Activated CD8-positive, alpha-beta memory T cell treated with anti-CD3 and anti-CD28 coated beads, Interleukin-2, amount 10 ng/mL, durations not matched to agents 7 days and 5 days (primary cell): ENCODE measurements at regions of chr15 and their contacts with region 1.

Region 1: GRCh38 chr15:67303490-67304363 is 49.1 kb downstream of the IQCH start:
- DNase-seq: no peak
- ATAC-seq: peak; percentile 53
- H3K4me3 Mint-ChIP-seq: no peak overlapping the region
- H3K27ac Mint-ChIP-seq: no peak overlapping the region
- H3K4me1 Mint-ChIP-seq: peaks cover 15% of the 10 kb centered on the region
- H3K27me3 Mint-ChIP-seq: peaks cover 20% of the 10 kb centered on the region

Region 2: DNA sequence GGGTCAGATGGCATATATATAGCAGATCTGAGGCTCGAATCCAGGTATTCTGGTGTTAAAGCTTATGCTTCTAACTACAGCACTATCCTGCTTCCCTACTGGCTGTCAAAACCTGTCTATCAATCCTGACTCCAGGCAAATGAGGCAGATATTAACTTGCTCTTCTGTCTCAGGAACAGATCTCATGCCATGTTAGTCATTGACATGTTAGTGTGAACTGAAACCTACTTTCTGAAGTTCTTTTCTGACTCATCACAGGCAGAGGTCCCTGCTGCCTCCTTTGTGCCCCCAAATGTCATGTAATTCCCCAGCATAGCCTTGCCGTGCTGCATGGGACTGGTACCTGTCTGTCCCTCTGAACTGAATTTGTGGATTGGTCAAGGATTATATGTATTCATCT is 363.4 kb before region 1 on chr15:
- CTCF ChIA-PET with region 1: interaction called, 87 read pairs
- DNase-seq: no peak
- ATAC-seq: peak; percentile 71
- H3K4me3 Mint-ChIP-seq: no peak overlapping the region
- H3K27ac Mint-ChIP-seq: no peak overlapping the region
- H3K4me1 Mint-ChIP-seq: peaks cover 21% of the 10 kb centered on the region
- H3K27me3 Mint-ChIP-seq: peaks cover 2% of the 10 kb centered on the region

Region 3: DNA sequence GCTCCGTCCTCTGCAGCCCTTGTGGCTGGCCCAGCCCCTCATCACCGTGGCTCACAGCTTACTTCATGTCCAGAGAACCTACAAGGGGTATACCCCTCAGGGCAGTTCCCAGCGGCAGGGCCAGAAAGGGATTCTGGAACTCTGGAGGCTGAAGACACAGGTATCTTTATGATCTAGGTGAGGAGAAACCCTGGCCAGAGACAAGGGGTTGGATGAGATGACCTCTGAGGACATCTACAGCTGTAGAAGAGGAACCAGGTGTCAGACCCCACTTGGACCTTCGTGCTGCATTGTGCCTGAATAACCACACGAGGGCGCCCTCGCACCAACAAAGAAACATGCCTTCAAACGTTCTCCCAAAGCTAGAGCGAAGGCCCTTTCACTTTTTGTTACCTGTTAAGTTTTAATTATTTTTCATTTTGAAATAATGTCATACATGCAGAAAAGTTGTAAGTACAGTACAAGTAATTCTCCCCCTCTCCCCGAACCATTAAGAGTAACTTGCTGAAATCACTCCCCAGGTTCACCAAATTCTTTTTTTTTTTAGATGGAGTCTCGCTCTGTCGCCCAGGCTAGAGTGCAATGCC is 357.1 kb before region 1 on chr15:
- CTCF ChIA-PET with region 1: interaction called, 87 read pairs
- DNase-seq: peak; percentile 81
- ATAC-seq: peak; percentile 77
- H3K4me3 Mint-ChIP-seq: no peak overlapping the region
- H3K27ac Mint-ChIP-seq: no peak overlapping the region
- H3K4me1 Mint-ChIP-seq: peaks cover 12% of the 10 kb centered on the region
- H3K27me3 Mint-ChIP-seq: peaks cover 15% of the 10 kb centered on the region

Region 4: DNA sequence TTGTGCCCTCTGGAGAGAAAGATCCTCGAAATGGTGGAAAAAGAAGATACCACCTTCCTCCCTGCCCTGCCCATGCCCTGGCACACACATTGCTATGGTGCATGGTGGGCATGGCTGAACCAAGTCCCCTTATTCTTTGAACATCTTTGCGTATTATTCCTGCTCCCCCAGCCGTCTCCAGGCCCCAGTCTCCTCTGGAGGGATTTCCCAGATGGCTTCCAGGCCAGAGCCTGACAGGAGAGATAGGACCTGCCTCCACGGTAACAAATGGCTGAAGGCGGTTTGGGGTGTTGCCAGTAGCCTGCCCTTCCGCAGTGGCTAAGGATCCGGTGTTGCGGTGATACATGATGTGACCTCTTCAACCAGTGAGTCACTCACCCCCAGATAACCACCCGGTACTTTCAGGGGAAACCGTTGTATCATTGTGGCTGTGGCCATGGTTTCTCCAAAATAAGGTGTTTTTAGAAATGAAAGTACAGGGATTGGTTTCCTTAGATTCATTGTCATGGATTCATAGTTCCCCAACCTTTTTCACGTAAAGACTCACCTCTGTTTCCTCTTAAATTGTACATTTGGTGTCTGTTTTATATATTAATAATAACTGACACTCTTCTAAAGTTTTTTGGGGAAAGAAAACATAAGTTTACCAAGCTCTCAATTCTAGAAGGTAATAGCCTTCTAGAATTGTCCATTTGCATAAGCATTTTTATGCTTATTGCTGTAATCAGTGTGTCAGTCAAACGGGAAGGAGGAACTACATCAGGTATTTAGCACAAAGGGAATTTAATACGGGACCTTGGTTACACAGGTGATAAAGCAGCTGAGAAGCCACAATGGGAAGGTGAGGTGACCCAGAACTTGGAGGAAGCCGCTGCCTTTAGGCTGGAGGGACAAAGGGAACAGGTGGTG is 212.4 kb before region 1 on chr15:
- CTCF ChIA-PET with region 1: no interaction called
- DNase-seq: peak; percentile 94
- ATAC-seq: peak; percentile 79
- H3K4me3 Mint-ChIP-seq: peak overlapping the region; percentile 58
- H3K27ac Mint-ChIP-seq: peak overlapping the region; percentile 86
- H3K4me1 Mint-ChIP-seq: peaks cover 100% of the 10 kb centered on the region
- H3K27me3 Mint-ChIP-seq: no peaks in the 10 kb centered on the region

Region 5: DNA sequence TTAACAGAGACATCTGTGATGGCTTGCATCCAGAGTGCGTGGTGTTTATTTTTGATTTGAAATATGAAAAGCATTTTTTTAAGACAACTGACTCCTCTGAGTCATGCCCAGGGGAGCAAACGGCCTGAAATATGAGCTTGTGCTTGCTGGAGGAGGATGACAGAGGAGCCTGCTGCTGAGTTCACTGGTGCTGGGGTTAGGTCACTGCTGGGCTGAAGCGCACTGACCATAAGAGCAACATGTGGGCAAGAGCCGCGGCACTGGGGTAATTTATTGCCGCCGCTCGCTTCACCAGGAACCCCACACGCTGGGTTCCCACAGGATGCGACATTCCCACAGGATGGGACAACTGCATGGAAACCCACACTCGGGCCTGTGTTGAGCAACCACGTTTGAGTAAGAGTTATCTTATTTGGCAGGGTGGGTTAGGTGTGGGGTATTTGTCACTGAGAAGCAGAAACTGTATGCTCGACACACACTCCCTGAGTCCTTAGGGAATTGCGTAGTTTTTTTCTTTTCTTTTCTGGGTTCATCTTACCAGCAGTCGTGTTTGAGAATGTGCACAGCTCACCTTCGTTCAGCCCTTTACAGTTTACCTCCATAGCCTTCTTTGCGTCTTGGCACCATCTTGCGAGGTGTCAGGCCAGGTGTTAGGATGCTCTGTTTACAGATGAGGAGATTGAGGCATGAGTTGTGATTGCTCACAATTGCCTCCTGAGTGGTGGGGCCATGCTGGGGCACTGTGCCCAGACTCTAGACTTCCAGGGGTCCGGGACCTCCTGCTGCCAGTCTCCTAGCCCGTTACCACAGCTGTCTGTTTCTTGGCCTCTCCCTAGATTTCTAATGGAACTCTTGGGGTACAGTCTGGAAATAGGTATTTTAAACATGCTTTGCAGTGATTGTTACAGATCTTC is 177.9 kb before region 1 on chr15:
- CTCF ChIA-PET with region 1: no interaction called
- DNase-seq: no peak
- ATAC-seq: no peak
- H3K4me3 Mint-ChIP-seq: no peak overlapping the region
- H3K27ac Mint-ChIP-seq: no peak overlapping the region
- H3K4me1 Mint-ChIP-seq: peaks cover 75% of the 10 kb centered on the region
- H3K27me3 Mint-ChIP-seq: no peaks in the 10 kb centered on the region

Region 6: DNA sequence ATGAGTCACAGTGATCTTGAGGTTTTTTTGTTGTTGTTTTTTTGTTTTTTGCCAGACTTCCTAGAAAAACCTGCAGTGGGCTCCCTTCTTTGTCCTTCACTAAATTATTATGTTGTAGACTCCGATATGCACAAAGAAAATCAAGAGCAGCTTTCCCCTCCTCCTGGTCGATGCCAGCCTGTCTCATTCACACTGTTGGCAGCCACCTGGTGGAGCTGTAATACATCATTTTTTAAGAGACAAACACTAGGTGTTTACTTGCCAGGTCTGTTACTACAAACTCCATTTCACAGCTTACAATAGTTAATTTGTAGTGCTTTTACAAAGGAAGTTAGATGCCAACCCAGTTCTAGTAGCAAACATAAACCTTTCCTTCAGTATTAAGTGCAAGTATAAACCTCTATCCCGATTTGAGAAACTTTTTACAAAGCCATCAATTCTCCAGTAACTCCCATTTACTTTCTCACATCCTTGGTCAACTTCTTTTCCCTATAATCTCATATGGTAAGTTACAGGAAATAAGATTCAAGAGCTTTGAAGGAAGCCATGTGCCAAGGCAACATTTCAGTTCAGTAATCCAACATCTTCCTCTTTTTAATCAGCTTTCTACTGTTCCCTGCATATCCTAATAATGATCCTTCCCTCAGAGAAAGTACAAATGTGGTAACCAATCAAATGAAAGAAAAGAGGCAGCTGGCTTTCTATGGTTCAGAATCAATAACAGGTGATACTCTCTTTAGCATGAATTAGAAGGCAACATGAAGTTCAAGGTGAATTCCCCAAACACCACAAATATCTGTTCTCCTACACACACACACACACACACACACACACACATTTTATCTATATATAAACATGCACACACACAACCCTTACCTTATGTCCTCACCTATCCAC is 63.2 kb before region 1 on chr15:
- CTCF ChIA-PET with region 1: interaction called, 15 read pairs
- DNase-seq: peak; percentile 56
- ATAC-seq: peak; percentile 48
- H3K4me3 Mint-ChIP-seq: peak overlapping the region; percentile 56
- H3K27ac Mint-ChIP-seq: peak overlapping the region; percentile 87
- H3K4me1 Mint-ChIP-seq: peaks cover 47% of the 10 kb centered on the region
- H3K27me3 Mint-ChIP-seq: no peaks in the 10 kb centered on the region

Region 7: GRCh38 chr15:67358812-67359211 is 55.1 kb after region 1 on chr15:
- CTCF ChIA-PET with region 1: no interaction called
- DNase-seq: no peak
- ATAC-seq: no peak
- H3K4me3 Mint-ChIP-seq: no peak overlapping the region
- H3K27ac Mint-ChIP-seq: no peak overlapping the region
- H3K4me1 Mint-ChIP-seq: no peaks in the 10 kb centered on the region
- H3K27me3 Mint-ChIP-seq: peaks cover 12% of the 10 kb centered on the region